ENCODE measurements at regions of chr2 and their contacts with region 1.

Region 1: DNA sequence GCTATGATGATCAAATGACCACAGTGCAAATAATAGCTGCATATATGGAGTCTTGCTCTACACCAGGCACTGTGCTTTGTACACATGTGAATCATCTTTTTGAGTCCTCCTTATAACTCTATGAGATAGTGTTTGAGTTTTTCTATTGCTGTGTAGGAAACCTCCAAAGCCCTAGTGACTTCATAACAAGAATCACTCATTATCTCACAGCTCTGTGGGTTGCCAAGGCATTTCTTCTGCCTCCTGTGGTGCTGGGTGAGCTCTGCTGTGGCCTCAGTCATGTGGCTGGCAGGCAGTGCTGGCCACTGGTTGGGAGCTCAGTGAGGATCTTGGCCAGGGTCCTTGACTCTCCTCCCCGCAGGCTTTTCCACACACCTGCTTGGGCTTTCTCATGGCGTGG is 153.4 kb downstream of the CAPN13 start:
- DNase-seq: peak; percentile 48 to 68
- ATAC-seq: peak; percentile 26 to 77 (median 66)
- H3K4me3 ChIP-seq: no peak overlapping the region
- H3K27ac ChIP-seq: no peak overlapping the region
- H3K4me1 ChIP-seq: peaks cover 28% of the 10 kb centered on the region
- H3K27me3 ChIP-seq: no peaks in the 10 kb centered on the region
- CTCF ChIP-seq: no peak

Region 2: GRCh38 chr2:30231212-30231995 is 422.4 kb before region 1 on chr2 and contains the start of gene LBH:
- intact Hi-C with region 1: no loop called
- DNase-seq: peak; percentile 80 to 87
- ATAC-seq: peak; percentile 71 to 87 (median 78)
- H3K4me3 ChIP-seq: peak within 1 kb of the TSS; percentile 72
- H3K27ac ChIP-seq: peak within 1 kb of the TSS; percentile 62
- H3K4me1 ChIP-seq: peaks cover 10% of the 10 kb centered on the region
- H3K27me3 ChIP-seq: peaks cover 0 to 44% (median 18%) of the 10 kb centered on the region in 3 donors
- CTCF ChIP-seq: no peak
- total RNA-seq, gene LBH: 11.1 to 15.5 (median 14.2) TPM

Region 3: DNA sequence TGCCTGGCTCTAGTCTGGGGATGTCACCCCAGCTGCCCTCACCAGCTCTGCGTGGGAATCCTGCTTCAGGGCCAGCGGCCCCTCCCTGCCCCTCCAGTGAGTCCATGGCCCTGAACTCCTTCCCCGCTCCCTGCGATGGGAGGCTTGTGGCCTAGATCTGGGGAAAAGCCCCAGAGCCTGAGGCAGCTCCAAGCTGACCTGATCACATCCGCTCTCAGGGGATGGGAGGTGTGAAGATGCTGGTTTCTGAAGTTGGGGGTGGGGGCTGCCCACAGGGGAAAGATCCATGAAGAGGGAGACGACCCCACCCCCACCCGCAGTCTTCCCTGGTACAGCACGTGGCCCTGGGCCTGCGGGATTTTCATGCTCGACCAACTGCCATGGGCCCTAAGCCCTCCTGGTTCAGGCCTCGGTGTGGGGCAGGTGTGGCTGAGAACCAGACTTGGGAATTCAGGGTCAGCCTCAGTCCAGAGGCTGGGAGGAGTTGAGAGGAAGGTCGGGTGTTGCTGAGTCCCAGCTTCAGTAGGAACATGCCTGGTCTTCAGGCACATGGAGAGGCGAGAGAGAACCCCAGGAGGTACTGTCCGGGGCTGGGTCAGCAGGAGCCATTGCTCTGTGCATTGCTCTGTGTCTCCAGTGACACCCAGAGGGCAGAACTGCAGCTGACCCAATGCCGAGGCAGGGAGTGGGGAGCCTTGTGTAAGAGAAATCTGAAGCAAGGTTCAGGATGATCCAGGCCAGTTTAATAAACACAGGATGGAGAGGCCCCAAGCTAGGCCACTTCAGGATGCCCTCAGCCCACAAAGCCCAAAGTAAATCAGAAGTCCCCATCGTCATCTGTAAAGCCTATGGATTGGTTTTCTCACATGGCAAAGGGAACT is 38.3 kb after region 1 on chr2:
- intact Hi-C with region 1: loop called in 1 of 2 experiments (anchors 2 kb)
- DNase-seq: peak; percentile 29 to 64
- ATAC-seq: peak; percentile 43 to 75 (median 58)
- H3K4me3 ChIP-seq: no peak overlapping the region
- H3K27ac ChIP-seq: no peak overlapping the region
- H3K4me1 ChIP-seq: peaks cover 37% of the 10 kb centered on the region
- H3K27me3 ChIP-seq: no peaks in the 10 kb centered on the region
- CTCF ChIP-seq: peak; percentile 28

Measured in psoas muscle (tissue), 8 donors.